Dendritic cell treated with granulocyte-macrophage colony-stimulating factor and Interleukin-4, amounts not matched to agents 40 ng/mL and 50 ng/mL, for 4 days (primary cell): ENCODE measurements at regions of chr13 and their contacts with region 1.

Region 1: GRCh38 chr13:112606109-112607001 is 18.4 kb upstream of the TUBGCP3 start:
- H3K4me3 Mint-ChIP-seq: peak overlapping the region; percentile 69
- H3K27ac Mint-ChIP-seq: peak overlapping the region; percentile 60
- H3K4me1 Mint-ChIP-seq: peaks cover 9% of the 10 kb centered on the region
- H3K27me3 Mint-ChIP-seq: peaks cover 31% of the 10 kb centered on the region

Region 2: GRCh38 chr13:111474136-111475002 is 1132.0 kb before region 1 on chr13:
- intact Hi-C with region 1: loop called (anchors 5 kb)
- H3K4me3 Mint-ChIP-seq: no peak overlapping the region
- H3K27ac Mint-ChIP-seq: no peak overlapping the region
- H3K4me1 Mint-ChIP-seq: no peaks in the 10 kb centered on the region
- H3K27me3 Mint-ChIP-seq: no peaks in the 10 kb centered on the region

Region 3: DNA sequence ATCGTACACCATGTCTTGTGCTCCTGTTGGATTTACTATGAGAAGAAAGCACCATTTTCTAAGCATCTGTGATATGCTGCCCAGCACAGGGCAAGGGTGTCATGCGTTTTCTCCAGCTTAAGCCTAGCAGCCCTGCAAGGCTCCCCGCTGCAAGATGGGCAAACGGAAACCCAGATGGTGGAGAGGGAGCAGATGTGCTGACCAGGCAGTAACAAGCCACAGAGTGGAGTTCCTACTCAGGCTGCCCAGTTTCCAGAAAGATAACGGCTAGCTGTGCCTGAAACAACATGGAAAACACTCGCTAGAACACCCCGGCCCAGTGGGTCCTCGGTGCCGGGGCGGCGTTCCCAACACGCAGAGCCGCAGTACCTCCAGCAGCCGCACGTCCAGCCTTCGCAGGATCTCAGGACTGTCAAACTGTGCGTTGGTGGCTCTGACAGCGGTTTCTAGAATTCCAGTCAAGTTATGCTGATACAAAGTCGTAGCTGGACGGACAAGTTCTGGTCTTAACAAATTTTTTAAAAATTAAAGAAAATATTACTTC is 86.8 kb before region 1 on chr13:
- intact Hi-C with region 1: loop called (anchors 5 kb)
- H3K4me3 Mint-ChIP-seq: no peak overlapping the region
- H3K27ac Mint-ChIP-seq: no peak overlapping the region
- H3K4me1 Mint-ChIP-seq: no peaks in the 10 kb centered on the region
- H3K27me3 Mint-ChIP-seq: no peaks in the 10 kb centered on the region

Region 4: DNA sequence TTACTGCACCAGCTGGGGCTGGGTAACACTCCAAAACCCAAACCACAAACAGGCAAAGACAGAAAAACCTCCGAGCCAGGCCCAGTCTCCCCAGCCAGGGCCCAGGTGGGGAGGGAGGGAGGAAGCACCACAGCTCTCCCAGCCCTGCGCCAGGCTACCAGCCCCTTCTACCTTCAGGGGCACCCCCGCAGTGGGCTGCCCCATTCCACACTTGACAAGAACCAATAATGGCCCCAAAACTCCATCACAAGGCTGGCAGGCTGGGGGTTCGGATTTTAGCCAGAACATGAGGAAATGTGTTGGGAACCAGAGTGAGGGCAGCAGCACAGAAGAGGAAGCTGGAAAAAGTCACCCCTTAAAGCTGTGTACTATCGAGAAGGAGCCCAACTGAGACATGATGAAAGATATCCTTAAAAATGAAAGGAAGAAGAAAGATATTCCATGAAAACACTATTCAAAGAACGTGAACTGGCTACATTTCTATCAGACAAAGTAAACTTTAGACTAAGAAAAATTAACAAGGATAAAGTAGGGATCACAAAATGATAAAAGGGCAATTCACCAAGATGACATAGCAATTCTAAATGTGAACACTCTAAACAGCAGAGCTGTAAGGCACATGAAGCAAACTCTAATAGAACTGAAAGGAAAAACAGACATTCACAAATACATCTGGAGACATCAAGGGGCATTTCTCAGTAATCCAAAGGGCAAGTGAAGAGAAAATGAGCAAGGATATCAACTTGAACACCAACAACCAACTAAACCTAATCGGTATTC is 31.3 kb before region 1 on chr13:
- intact Hi-C with region 1: loop called (anchors 5 kb)
- H3K4me3 Mint-ChIP-seq: peak overlapping the region; percentile 41
- H3K27ac Mint-ChIP-seq: peak overlapping the region; percentile 55
- H3K4me1 Mint-ChIP-seq: peaks cover 73% of the 10 kb centered on the region
- H3K27me3 Mint-ChIP-seq: no peaks in the 10 kb centered on the region

Region 5: DNA sequence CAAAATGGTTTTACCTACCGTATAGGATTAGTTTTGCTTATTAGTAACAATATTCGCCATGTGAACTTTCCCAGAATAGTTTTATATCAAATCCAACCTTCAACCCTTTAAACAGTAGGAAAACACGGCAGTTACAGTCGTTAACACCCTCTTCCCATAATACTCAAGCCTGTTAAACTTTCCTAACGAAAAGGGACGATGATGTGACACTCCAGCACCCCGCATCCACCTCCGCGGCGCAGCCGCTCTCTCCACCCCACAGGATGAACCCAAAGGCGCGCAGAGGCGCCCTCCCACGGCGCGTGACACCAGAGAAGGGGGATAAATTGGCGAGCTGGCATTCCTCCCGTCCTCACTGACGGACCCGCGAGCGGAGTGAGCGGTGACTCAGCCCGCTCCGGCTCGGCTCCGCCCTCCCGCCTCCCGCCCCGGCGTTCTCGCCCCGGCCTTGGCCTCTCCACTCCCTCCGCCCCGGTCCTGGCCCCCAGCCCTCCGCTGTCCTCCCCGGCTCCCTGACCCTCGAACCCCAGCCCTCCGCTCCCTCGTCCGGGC is 19.1 kb before region 1 on chr13:
- intact Hi-C with region 1: loop called (anchors 1 kb)
- H3K4me3 Mint-ChIP-seq: peak overlapping the region; percentile 92
- H3K27ac Mint-ChIP-seq: peak overlapping the region; percentile 96
- H3K4me1 Mint-ChIP-seq: peaks cover 41% of the 10 kb centered on the region
- H3K27me3 Mint-ChIP-seq: no peaks in the 10 kb centered on the region